B cell (primary cell): ENCODE measurements at regions of chr1 and their contacts with region 1.

Region 1: DNA sequence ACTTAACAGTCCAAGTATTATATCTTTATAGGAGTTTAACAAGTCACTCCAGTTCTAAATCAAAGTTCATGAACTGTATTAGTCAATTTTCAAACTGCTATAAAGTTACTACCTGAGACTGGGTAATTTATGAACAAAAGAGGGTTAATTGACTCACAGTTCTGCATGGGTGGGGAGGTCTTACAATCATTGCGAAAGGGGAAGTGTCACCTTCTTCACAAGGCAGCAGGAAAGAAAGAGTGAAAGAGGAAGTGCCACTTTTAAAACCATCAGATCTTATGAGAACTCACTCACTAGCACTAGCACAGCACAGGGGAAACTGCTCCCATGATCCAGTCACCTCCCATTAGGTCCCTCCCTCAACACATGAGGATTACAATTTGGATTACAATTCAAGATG is 70.0 kb downstream of the CLCA4 start:
- DNase-seq: peak; percentile 88
- ATAC-seq: peak; percentile 99
- H3K4me3 ChIP-seq: peak overlapping the region in 1 of 5 experiments; percentile 31
- H3K4me3 Mint-ChIP-seq: peak overlapping the region; percentile 27
- H3K27ac ChIP-seq: peak overlapping the region; percentile 65 to 77
- H3K27ac Mint-ChIP-seq: peak overlapping the region; percentile 70
- H3K4me1 ChIP-seq: peaks cover 22 to 23% of the 10 kb centered on the region in 2 donors
- H3K4me1 Mint-ChIP-seq: peaks cover 42% of the 10 kb centered on the region
- H3K27me3 ChIP-seq: no peaks in the 10 kb centered on the region
- H3K27me3 Mint-ChIP-seq: no peaks in the 10 kb centered on the region
- CTCF ChIP-seq: no peak

Region 2: GRCh38 chr1:85628791-85629531 is 987.9 kb before region 1 on chr1:
- CTCF ChIA-PET with region 1: no interaction called
- POLR2A ChIA-PET with region 1: no interaction called
- intact Hi-C with region 1: no loop called
- DNase-seq: no peak
- ATAC-seq: no peak
- H3K4me3 ChIP-seq: no peak overlapping the region
- H3K4me3 Mint-ChIP-seq: no peak overlapping the region
- H3K27ac ChIP-seq: no peak overlapping the region
- H3K27ac Mint-ChIP-seq: no peak overlapping the region
- H3K4me1 ChIP-seq: no peaks in the 10 kb centered on the region
- H3K4me1 Mint-ChIP-seq: no peaks in the 10 kb centered on the region
- H3K27me3 ChIP-seq: no peaks in the 10 kb centered on the region
- H3K27me3 Mint-ChIP-seq: no peaks in the 10 kb centered on the region
- CTCF ChIP-seq: no peak

Region 3: DNA sequence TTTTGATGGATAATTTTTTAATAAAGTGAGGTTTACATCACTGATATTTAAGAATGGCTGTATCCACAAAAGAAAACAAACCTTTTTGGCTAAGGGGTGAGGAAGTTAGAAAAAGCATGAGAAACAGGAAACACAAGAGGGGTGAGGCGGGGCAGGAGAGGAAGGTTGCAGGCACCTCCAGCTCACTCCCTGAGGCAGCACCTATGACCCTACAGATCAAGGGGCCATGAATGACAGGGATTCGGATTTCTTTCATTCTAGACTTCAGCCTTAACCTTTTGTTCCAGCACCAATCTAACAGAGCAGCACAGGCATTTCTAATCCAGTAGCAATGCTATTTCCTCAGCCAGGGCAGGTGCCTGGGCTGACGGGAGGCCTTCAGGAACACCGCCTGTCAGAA is 65.5 kb before region 1 on chr1:
- CTCF ChIA-PET with region 1: no interaction called
- POLR2A ChIA-PET with region 1: no interaction called
- intact Hi-C with region 1: loop called (anchors 2 kb)
- DNase-seq: no peak
- ATAC-seq: no peak
- H3K4me3 ChIP-seq: no peak overlapping the region
- H3K4me3 Mint-ChIP-seq: no peak overlapping the region
- H3K27ac ChIP-seq: no peak overlapping the region
- H3K27ac Mint-ChIP-seq: no peak overlapping the region
- H3K4me1 ChIP-seq: no peaks in the 10 kb centered on the region
- H3K4me1 Mint-ChIP-seq: peaks cover 4% of the 10 kb centered on the region
- H3K27me3 ChIP-seq: no peaks in the 10 kb centered on the region
- H3K27me3 Mint-ChIP-seq: no peaks in the 10 kb centered on the region
- CTCF ChIP-seq: no peak

Region 4: DNA sequence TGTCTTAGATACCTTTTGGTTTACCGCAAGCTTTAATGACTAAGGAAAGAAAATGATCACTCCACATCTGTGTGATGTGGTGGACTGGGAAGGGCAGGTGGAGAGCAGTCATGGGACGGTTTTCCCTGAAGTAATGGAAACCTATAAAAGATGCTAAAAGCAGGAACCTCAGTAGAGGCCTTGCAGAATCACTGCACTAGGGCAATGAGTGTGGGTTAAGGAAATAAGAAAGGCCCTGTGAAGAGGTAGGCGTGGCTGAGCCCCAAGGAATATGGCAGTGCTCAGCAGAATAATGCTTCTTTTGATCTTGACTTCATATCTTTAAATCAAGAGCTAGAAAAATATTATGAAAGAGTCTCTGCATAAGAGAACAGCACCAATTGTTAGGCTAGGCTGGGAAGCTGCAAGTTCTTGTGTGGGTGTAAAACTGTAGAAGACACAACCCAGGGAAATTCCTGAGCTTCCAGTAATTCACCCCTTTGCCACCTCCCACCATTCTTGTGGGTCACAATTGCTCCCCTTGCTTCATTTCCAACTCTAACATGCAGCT is 20.1 kb before region 1 on chr1:
- CTCF ChIA-PET with region 1: no interaction called
- POLR2A ChIA-PET with region 1: no interaction called
- intact Hi-C with region 1: no loop called
- DNase-seq: no peak
- ATAC-seq: no peak
- H3K4me3 ChIP-seq: no peak overlapping the region
- H3K4me3 Mint-ChIP-seq: no peak overlapping the region
- H3K27ac ChIP-seq: no peak overlapping the region
- H3K27ac Mint-ChIP-seq: no peak overlapping the region
- H3K4me1 ChIP-seq: no peaks in the 10 kb centered on the region
- H3K4me1 Mint-ChIP-seq: no peaks in the 10 kb centered on the region
- H3K27me3 ChIP-seq: no peaks in the 10 kb centered on the region
- H3K27me3 Mint-ChIP-seq: peaks cover 1% of the 10 kb centered on the region
- CTCF ChIP-seq: no peak